Activated T-helper 2 cell treated with anti-CD3 and anti-CD28 coated beads, Interferon-gamma antibody, Interleukin-2, Interleukin-4, amounts not matched to agents 10 μg/mL and 5 μg/mL and 100 μg/mL, durations not matched to agents 14 hours and 24 hours and 36 hours (primary cell): ENCODE measurements at regions of chr2 and their contacts with region 1.

Region 1: DNA sequence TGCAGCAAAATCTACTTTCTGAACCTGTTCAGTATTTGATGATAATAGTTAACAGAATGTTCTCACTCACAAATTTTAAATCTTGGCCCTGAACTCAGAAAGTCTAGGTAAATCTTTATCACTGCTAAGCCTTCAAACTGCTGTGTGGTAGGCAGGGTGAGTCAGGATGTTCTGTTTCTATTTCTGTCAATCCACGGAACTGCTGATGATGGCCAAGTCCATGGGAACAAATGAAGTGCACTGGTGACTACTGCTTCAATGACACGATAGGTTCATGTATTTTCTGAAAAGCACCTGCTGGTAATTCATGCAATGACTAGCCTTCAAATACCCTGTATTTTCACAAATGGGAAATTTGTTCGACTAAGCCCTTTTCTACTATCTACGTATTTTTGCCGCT is 14.2 kb downstream of the NIFK start:
- DNase-seq: no peak
- H3K4me3 Mint-ChIP-seq: no peak overlapping the region
- H3K27ac Mint-ChIP-seq: peak overlapping the region; percentile 87
- H3K4me1 Mint-ChIP-seq: peaks cover 18% of the 10 kb centered on the region
- H3K27me3 Mint-ChIP-seq: no peaks in the 10 kb centered on the region

Region 2: GRCh38 chr2:121400201-121400600 is 322.3 kb before region 1 on chr2:
- intact Hi-C with region 1: loop called (anchors 1 kb)
- DNase-seq: no peak
- H3K4me3 Mint-ChIP-seq: no peak overlapping the region
- H3K27ac Mint-ChIP-seq: no peak overlapping the region
- H3K4me1 Mint-ChIP-seq: no peaks in the 10 kb centered on the region
- H3K27me3 Mint-ChIP-seq: no peaks in the 10 kb centered on the region

Region 3: GRCh38 chr2:121649596-121650314 is 72.7 kb before region 1 on chr2:
- intact Hi-C with region 1: loop called (anchors 1 kb)
- DNase-seq: peak; percentile 96
- H3K4me3 Mint-ChIP-seq: peak overlapping the region; percentile 98
- H3K27ac Mint-ChIP-seq: peak overlapping the region; percentile 98
- H3K4me1 Mint-ChIP-seq: peaks cover 49% of the 10 kb centered on the region
- H3K27me3 Mint-ChIP-seq: no peaks in the 10 kb centered on the region

Region 4: GRCh38 chr2:121736462-121737341 is 14.2 kb after region 1 on chr2 and contains the start of gene NIFK:
- intact Hi-C with region 1: loop called (anchors 1 kb)
- DNase-seq: peak; percentile 99
- H3K4me3 Mint-ChIP-seq: peak within 1 kb of the TSS; percentile 99
- H3K27ac Mint-ChIP-seq: peak within 1 kb of the TSS; percentile 92
- H3K4me1 Mint-ChIP-seq: peaks cover 29% of the 10 kb centered on the region
- H3K27me3 Mint-ChIP-seq: no peaks in the 10 kb centered on the region
- total RNA-seq, gene NIFK: 117 and 125 TPM in 2 replicates

Region 5: GRCh38 chr2:121755236-121756111 is 33.0 kb after region 1 on chr2 and contains the start of gene TSN:
- intact Hi-C with region 1: loop called (anchors 1 kb)
- DNase-seq: peak; percentile 97
- H3K4me3 Mint-ChIP-seq: peak within 1 kb of the TSS; percentile 97
- H3K27ac Mint-ChIP-seq: peak within 1 kb of the TSS; percentile 91
- H3K4me1 Mint-ChIP-seq: peaks cover 22% of the 10 kb centered on the region
- H3K27me3 Mint-ChIP-seq: no peaks in the 10 kb centered on the region
- total RNA-seq, gene TSN: 67.6 and 72.5 TPM in 2 replicates

Region 6: DNA sequence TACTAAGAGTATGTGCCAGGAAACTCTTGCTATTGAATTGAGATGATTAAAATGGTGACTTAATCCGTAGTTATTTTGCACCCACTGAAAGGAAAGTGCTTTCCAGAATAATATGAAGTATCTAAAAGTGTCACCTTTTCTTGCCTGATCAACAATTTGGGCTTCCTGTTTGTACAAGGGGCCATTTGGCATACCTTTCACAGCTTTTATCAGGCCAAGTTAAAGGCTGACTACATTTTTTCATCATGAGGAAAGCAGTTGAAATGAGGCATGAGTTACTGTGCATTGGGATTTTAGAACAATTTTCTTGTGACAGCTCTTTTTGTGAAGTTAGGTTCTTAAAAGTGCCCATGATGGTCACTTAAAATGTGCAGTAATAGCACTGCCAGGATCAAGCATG is 44.1 kb after region 1 on chr2:
- intact Hi-C with region 1: no loop called
- DNase-seq: no peak
- H3K4me3 Mint-ChIP-seq: no peak overlapping the region
- H3K27ac Mint-ChIP-seq: no peak overlapping the region
- H3K4me1 Mint-ChIP-seq: no peaks in the 10 kb centered on the region
- H3K27me3 Mint-ChIP-seq: no peaks in the 10 kb centered on the region

Region 7: GRCh38 chr2:122055521-122055931 is 333.0 kb after region 1 on chr2:
- intact Hi-C with region 1: no loop called
- DNase-seq: no peak
- H3K4me3 Mint-ChIP-seq: no peak overlapping the region
- H3K27ac Mint-ChIP-seq: no peak overlapping the region
- H3K4me1 Mint-ChIP-seq: no peaks in the 10 kb centered on the region
- H3K27me3 Mint-ChIP-seq: no peaks in the 10 kb centered on the region

Region 8: GRCh38 chr2:122145856-122146255 is 423.4 kb after region 1 on chr2:
- intact Hi-C with region 1: no loop called
- DNase-seq: no peak
- H3K4me3 Mint-ChIP-seq: no peak overlapping the region
- H3K27ac Mint-ChIP-seq: no peak overlapping the region
- H3K4me1 Mint-ChIP-seq: no peaks in the 10 kb centered on the region
- H3K27me3 Mint-ChIP-seq: no peaks in the 10 kb centered on the region